A549 (cell line): ENCODE measurements at regions of chr1 and their contacts with region 1.

Region 1: DNA sequence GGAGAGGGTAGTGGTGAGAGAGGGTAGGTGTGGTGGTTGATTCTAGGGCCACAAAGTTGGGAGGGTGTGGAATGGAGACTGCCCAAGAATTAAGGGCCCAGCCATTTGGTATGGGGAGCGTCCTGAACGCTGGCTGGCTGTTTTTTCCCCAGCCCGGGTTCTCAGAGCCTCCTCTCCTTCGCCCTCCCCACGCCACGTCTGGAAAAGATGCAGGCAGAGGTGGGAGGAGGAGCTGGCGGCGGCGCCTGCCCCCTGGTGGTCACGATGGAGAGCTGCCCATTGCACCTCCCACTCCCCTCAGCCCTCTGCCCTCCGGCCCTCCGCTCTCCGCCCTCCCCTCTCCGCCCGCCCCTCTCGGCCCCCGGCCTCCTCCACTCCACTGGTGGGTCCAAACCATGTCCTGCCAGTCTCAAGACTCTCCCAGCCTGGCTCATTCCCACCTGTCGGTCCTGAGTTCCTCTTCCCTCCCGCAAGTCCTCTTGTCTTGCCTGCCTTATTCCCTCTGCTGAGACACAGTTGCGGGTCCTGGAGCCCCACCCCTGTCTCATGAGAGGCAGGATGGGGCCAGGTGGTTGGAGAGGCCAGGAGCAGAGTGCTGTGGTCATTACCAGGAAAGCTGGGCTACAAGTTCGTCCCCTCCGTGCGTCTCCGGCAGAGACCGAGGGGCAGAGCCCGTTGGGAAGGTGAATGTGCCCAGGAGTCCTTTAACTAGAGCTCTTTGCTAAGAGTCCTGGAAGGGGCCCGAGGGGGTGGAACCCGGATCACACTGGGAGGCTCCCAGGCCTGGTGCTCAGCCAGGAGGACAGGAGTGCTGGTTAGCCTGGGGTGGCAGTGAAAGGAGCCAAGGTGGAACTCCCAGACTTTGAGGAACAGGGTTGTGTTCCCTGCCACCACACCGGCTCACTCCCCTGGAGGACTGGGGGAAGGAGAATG is 22.6 kb downstream of the ETNK2 start:
- DNase-seq: peak; percentile 62 to 94
- ATAC-seq: peak; percentile 78 to 91
- H3K4me3 ChIP-seq: peak overlapping the region; percentile 23; the same call in 2 of the 3 replicates
- H3K27ac ChIP-seq: peak overlapping the region; percentile 47 to 78; a peak in 5 of 6 replicates
- H3K4me1 ChIP-seq: peaks cover 31% of the 10 kb centered on the region
- CTCF ChIP-seq: peak; percentile 90
- EP300 ChIP-seq: no peak
- POLR2A ChIP-seq: no peak
- RAD21 ChIP-seq: peak; percentile 83 to 93

Region 2: GRCh38 chr1:203843435-203843834 is 285.8 kb before region 1 on chr1:
- CTCF ChIA-PET with region 1: interaction called, 14 read pairs
- POLR2A ChIA-PET with region 1: no interaction called
- DNase-seq: no peak
- ATAC-seq: no peak
- H3K4me3 ChIP-seq: no peak overlapping the region
- H3K27ac ChIP-seq: no peak overlapping the region
- H3K4me1 ChIP-seq: peaks cover 10% of the 10 kb centered on the region; the same call in 1 of the 3 replicates
- CTCF ChIP-seq: no peak
- EP300 ChIP-seq: no peak
- POLR2A ChIP-seq: no peak
- RAD21 ChIP-seq: no peak

Region 3: GRCh38 chr1:203888807-203889251 is 240.4 kb before region 1 on chr1:
- CTCF ChIA-PET with region 1: interaction called, 11 read pairs
- POLR2A ChIA-PET with region 1: interaction called, 4 read pairs
- DNase-seq: peak; percentile 32 to 61
- ATAC-seq: peak; percentile 59 to 89; a peak in 4 of 6 replicates
- H3K4me3 ChIP-seq: no peak overlapping the region
- H3K27ac ChIP-seq: peak overlapping the region; percentile 27 to 85
- H3K4me1 ChIP-seq: peaks cover 17% of the 10 kb centered on the region; the same call in 2 of the 3 replicates
- CTCF ChIP-seq: no peak
- EP300 ChIP-seq: no peak
- POLR2A ChIP-seq: no peak
- RAD21 ChIP-seq: no peak; a peak in 1 of 5 replicates

Region 4: DNA sequence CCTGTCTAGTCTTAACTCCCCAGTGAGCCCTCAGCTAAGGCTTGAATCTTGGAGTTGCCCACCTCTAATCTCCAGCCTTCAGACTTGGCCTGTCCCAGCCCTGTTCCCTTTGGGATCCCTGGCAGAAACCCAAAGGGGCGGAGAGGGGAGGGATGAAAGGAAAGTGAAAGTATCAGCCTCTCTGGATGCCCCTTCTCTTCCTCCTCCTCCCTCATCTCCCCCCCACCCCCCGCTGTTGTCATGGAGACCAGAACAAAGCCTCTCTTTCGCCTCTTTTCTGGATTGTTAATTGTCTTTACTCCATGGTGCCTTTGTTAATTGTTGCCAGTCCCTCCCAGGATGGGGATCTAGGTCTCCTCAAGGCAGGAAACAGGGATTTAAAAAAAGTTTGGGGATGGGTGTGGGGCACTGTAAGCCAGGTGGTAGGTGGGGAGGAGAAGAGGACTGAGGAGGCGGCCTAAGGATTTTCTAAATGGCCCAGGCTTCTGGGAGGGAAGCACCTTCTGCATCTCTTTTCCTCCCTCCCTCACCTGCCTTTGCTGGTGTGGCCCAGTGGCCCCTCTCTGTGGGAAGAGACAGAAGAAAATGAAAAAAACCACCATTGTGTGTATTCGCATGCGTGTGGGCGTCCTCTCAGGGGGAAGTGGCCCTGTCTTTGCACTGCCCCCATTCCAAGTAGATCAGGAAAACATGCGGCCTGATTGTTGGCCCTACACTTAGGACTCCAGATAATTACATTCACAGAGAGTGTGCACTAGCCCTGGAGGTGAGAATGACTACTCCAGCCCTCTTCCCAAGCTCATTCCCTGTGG is 63.9 kb before region 1 on chr1:
- CTCF ChIA-PET with region 1: interaction called, 18 read pairs
- POLR2A ChIA-PET with region 1: no interaction called
- DNase-seq: no peak
- ATAC-seq: no peak; a peak in 1 of 6 replicates
- H3K4me3 ChIP-seq: no peak overlapping the region
- H3K27ac ChIP-seq: no peak overlapping the region
- H3K4me1 ChIP-seq: no peaks in the 10 kb centered on the region
- CTCF ChIP-seq: no peak
- EP300 ChIP-seq: no peak
- POLR2A ChIP-seq: no peak
- RAD21 ChIP-seq: no peak

Region 5: DNA sequence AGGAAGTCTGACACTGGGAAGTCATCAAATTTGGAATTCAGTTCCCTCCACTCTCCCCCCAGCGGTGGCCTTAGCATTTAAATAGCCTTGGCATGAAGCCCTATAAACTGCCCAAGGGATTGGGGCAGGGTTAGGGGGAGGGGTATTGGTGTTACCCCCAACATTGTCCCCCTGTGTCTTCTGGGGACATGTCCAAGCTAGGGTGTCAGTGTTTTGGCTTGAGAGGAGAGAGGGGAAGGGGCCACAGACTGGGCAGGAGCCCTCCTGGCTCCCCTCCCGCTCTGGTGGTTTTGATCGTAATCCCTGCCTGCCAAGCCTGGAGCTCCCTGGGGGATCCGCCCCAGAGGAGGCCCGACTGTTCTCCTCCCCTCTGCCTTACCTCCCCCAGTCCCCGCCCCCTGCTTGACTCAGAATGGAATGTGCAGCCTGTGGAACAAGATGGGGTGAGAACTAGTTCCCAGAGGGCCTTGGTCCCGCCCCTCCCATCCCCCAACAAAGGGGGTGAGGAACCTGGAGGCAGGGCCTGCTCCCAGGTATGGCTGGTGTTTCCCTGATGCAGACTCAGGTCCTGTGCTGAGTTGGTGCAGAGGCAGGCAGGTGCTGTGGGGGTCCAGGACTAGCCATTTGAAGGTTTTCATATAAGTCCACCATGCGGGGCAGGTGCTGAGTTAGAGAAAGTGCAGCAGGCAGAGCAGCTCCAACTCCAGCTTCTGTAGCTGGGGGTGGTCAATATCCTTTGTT is 48.9 kb before region 1 on chr1:
- CTCF ChIA-PET with region 1: interaction called, 30 read pairs
- POLR2A ChIA-PET with region 1: no interaction called
- DNase-seq: peak; percentile 85 to 95
- ATAC-seq: peak; percentile 90 to 91
- H3K4me3 ChIP-seq: no peak overlapping the region
- H3K27ac ChIP-seq: peak overlapping the region; percentile 71 to 86
- H3K4me1 ChIP-seq: peaks cover 55% of the 10 kb centered on the region
- CTCF ChIP-seq: no peak
- EP300 ChIP-seq: no peak
- POLR2A ChIP-seq: no peak
- RAD21 ChIP-seq: no peak

Region 6: DNA sequence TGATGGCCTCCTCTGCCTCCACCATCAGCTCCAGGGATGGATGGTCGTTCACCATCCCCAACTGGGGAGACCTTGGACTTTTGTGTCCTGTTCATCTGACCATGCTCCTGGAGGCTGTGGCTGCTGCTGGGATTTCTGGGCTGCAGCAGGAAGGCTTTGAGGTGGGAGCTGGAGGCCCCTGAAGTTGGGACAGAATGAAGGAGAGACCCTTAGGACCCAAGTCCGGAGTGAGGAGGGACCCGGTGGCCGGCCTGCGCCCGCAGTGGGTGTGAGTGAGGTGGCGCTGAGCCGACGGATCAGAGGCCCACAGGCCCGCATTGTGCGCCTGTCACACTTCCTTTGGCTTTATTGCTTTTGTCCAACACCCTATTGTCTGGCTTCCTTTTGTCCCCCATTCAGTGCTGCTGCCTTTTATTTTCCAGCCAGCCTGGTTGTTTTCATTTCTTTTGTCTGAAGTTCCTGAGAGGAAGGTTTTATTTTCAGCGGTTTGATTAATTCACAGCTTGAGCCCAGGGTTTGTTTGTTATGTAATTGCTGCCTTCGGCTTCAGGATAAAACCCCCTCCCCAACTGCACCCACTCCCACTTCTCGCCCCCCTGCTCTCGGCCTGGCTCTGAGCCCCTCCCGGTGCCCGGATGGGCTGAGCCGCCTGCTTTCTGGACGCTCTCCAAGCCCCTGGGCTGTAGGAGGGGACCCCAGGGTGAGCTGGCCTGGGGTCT is 20.6 kb before region 1 on chr1:
- CTCF ChIA-PET with region 1: interaction called, 23 read pairs
- POLR2A ChIA-PET with region 1: no interaction called
- DNase-seq: no peak
- ATAC-seq: no peak
- H3K4me3 ChIP-seq: no peak overlapping the region
- H3K27ac ChIP-seq: no peak overlapping the region
- H3K4me1 ChIP-seq: peaks cover 34% of the 10 kb centered on the region
- CTCF ChIP-seq: no peak
- EP300 ChIP-seq: no peak
- POLR2A ChIP-seq: no peak
- RAD21 ChIP-seq: no peak

Region 7: DNA sequence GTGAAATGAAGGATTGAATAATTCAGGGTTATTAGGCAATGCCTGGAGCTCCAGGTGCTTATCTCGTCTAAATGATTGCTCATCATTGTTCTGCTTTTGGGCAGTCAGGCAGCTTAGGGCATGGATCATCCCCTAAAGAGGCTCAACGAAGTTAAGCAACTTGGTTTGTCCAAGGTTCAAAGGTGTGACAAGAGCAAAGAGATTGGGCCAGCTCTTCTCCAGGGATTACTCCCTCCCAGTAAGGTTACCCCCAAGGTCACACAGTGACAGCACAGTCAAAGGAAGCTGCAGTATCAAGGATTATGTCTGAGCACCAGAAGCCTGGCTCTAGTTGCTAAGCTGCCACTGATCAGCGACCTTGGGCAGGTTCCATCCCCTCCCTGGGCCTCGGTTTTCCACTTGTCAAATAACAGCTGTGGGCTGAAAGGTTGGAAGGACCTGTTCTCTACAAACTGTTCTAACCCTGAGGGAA is 15.8 kb after region 1 on chr1:
- CTCF ChIA-PET with region 1: interaction called, 83 read pairs
- POLR2A ChIA-PET with region 1: no interaction called
- DNase-seq: no peak
- ATAC-seq: no peak
- H3K4me3 ChIP-seq: no peak overlapping the region
- H3K27ac ChIP-seq: no peak overlapping the region
- H3K4me1 ChIP-seq: no peaks in the 10 kb centered on the region
- CTCF ChIP-seq: no peak
- EP300 ChIP-seq: no peak
- POLR2A ChIP-seq: no peak
- RAD21 ChIP-seq: no peak

Region 8: GRCh38 chr1:204408074-204408507 is 278.9 kb after region 1 on chr1:
- CTCF ChIA-PET with region 1: no interaction called
- POLR2A ChIA-PET with region 1: no interaction called
- DNase-seq: peak in 1 of 2 experiments; percentile 46
- ATAC-seq: no peak
- H3K4me3 ChIP-seq: peak overlapping the region; percentile 94
- H3K27ac ChIP-seq: peak overlapping the region; percentile 24 to 98; a peak in 2 of 6 replicates
- H3K4me1 ChIP-seq: peaks cover 38% of the 10 kb centered on the region
- CTCF ChIP-seq: no peak
- EP300 ChIP-seq: no peak
- POLR2A ChIP-seq: no peak
- RAD21 ChIP-seq: no peak